Heart right ventricle (tissue), 16 donors: ENCODE measurements at regions of chr20 and their contacts with region 1.

Region 1: DNA sequence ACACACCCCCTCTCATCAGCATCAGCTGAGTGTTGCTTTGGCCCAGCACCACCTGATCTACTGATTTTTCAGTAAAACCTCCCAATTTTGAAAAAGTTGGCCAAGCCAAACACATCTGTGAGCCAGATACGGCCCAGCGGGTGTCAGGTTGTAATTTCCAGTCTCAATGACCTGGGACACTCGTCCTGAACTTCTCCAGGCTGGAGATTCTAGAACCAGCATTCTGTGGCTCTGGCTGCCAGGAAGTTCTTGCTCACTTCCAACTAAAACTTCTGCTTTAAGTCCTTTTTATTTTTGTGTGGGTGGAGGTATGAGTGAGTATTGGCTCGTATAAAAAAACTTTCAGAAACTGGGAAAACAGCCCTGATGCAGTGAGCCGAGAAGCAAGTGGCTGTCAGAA is 5.1 kb downstream of the KIAA1755 start:
- DNase-seq: peak in 1 of 2 donors; percentile 28
- ATAC-seq: peak; percentile 15 to 64 (median 43)
- H3K4me3 ChIP-seq: no peak overlapping the region
- H3K27ac ChIP-seq: peak overlapping the region in 6 of 10 donors; percentile 11 to 70 (median 52)
- H3K4me1 ChIP-seq: peaks cover 0 to 49% (median 16%) of the 10 kb centered on the region in 9 donors
- H3K27me3 ChIP-seq: peaks cover 0 to 19% (median 7%) of the 10 kb centered on the region in 7 donors
- CTCF ChIP-seq: no peak

Region 2: GRCh38 chr20:36808317-36809257 is 1446.8 kb before region 1 on chr20:
- intact Hi-C with region 1: no loop called
- DNase-seq: peak; percentile 42 to 76
- ATAC-seq: peak in 4 of 8 donors; percentile 35 to 54 (median 46)
- H3K4me3 ChIP-seq: no peak overlapping the region
- H3K27ac ChIP-seq: peak overlapping the region in 1 of 10 donors; percentile 21
- H3K4me1 ChIP-seq: peaks cover 0 to 10% (median 0%) of the 10 kb centered on the region in 9 donors
- H3K27me3 ChIP-seq: no peaks in the 10 kb centered on the region
- CTCF ChIP-seq: peak; percentile 37 to 85 (median 70)

Region 3: DNA sequence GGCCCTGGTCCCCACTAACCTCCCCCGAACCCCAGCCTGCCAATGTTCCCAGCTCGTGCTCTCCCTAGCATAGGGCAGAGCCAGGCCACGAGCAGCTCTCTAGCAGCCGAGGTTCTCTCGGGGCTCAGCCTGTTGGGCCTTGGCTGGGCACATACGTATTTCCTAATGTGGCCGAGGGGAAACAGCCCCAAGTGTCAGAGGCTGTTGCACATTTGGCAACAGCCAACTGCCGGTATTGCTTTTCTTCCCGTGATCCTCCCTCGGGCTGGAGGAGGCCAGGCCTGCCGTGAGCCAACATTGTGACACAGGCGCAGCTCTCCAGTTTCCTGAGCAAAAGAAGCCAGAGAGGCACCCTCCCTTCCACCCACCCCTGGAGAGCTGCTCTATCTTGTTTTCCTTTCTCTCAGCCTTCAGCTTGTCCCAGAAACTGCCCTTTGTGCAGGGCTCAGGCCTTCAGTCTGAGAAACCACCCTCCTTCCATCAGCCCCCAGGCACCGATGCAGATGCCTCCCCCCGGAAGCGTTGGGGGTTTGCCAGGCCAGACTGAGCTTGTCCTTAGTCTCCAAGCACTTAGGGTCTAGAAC is 43.4 kb after region 1 on chr20:
- intact Hi-C with region 1: loop called in 1 of 10 experiments (anchors 5 kb)
- DNase-seq: peak; percentile 75 to 79
- ATAC-seq: peak; percentile 88 to 96 (median 93)
- H3K4me3 ChIP-seq: no peak overlapping the region
- H3K27ac ChIP-seq: peak overlapping the region; percentile 45 to 85 (median 67)
- H3K4me1 ChIP-seq: peaks cover 0 to 40% (median 9%) of the 10 kb centered on the region in 9 donors
- H3K27me3 ChIP-seq: peaks cover 0 to 26% (median 8%) of the 10 kb centered on the region in 7 donors
- CTCF ChIP-seq: no peak